ENCODE measurements at regions of chr17 and their contacts with region 1.

Region 1: GRCh38 chr17:17694169-17695081 is 13.2 kb downstream of the RAI1 start:
- DNase-seq: peak; percentile 48 to 88
- H3K4me3 ChIP-seq: peak overlapping the region; percentile 71 to 78
- H3K27ac ChIP-seq: peak overlapping the region; percentile 98 to 99
- H3K4me1 ChIP-seq: peaks cover 6 to 51% of the 10 kb centered on the region in 2 donors
- H3K27me3 ChIP-seq: no peaks in the 10 kb centered on the region
- CTCF ChIP-seq: no peak

Region 2: DNA sequence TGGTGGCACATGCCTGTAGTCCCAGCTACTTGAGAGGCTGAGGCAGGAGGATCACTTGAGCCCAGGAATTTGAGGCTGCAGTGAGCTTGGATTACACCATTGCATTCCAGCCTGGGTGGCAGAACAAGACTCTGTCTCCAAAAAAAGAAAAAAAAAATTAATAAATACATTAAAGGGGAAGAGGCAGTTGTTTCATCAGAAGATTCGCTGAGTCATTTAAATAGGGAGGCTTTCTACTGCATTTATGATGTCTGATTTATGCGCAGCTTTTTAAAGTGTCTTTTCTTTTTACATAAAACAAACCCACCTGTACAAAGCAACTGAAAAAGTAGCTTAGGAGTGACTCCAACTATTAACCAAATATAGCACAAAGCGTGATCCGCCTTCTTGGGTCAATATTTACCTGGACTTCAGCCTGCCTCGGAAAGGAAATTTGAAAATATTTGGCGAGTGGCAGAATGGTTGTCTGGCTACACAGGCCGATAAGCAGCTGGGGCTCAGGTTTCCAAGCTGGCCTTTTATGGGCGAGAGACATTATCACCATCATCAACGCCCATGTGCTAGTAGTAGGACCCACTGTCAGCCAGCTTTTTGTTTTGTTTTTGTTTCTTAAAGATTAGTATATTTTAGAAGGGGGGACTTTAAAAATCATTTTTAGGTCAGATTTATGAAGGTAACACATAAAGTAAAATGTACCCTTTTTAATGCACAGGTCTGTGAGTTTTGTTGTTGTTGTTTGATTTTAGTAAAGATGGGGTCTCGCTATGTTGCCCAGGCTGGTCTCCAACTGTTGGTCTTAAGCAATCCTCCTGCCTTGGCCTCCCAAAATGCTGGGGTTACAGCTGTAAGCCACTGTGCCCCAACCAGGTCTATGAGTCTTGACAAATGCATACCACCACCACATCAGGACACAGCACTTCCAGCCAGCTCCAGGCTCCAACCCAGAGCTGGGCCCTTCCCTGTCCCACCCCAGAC is 155.7 kb before region 1 on chr17:
- intact Hi-C with region 1: no loop called
- DNase-seq: no peak
- H3K4me3 ChIP-seq: no peak overlapping the region
- H3K27ac ChIP-seq: no peak overlapping the region
- H3K4me1 ChIP-seq: peaks cover 0 to 21% of the 10 kb centered on the region in 2 donors
- H3K27me3 ChIP-seq: no peaks in the 10 kb centered on the region
- CTCF ChIP-seq: no peak

Region 3: GRCh38 chr17:17710728-17711541 is 16.5 kb after region 1 on chr17:
- intact Hi-C with region 1: loop called (anchors 2 kb)
- DNase-seq: peak; percentile 30 to 88
- H3K4me3 ChIP-seq: no peak overlapping the region
- H3K27ac ChIP-seq: peak overlapping the region; percentile 64 to 70
- H3K4me1 ChIP-seq: peaks cover 5 to 29% of the 10 kb centered on the region in 2 donors
- H3K27me3 ChIP-seq: no peaks in the 10 kb centered on the region
- CTCF ChIP-seq: no peak

Region 4: DNA sequence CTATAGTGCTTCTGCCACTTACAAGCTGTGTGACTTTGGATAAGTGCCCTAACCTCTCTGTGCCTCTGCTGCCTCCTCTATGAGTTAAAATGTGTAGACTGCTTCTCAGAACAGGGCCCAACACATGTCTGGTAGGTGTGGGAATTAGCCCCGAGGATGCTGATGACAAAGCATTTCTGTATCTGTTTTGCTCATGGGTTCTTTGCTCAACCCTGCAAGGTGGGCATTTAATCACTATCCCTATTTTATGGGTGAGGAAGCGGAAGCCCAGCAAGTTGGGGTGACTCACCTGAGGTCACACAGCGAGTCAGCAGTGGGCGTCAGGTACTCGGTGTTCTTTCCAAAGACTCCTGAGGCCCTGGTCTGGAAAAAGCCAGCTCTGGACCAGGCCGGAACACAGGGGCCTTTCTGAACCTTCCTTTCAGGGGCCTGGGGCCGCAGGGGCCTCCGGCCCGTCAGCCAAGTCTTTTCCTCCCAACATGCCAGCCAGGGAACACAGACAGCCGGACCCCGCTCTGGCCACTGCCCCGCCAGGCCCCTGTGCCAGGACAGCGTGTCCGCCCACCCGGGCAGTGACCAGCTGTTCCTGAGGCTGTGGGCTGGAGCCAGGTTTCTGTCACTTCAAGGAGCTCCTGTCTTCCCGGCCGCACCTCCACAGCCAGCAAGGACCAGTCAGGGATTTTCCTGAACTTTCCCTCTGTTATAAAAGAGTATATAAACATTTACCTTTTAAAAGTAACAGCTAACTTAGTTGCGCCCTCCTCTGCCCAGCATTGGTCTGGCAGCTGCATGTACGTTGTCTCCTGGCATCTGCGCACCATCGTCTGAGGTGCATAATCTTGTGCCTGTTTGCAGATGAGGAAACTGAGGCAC is 79.8 kb after region 1 on chr17:
- intact Hi-C with region 1: no loop called
- DNase-seq: no peak
- H3K4me3 ChIP-seq: peak overlapping the region in 1 of 2 donors; percentile 21
- H3K27ac ChIP-seq: peak overlapping the region; percentile 59 to 70
- H3K4me1 ChIP-seq: peaks cover 3% of the 10 kb centered on the region in 2 donors
- H3K27me3 ChIP-seq: no peaks in the 10 kb centered on the region
- CTCF ChIP-seq: peak in 2 of 3 experiments; percentile 9 to 53